ENCODE measurements at regions of chr15 and their contacts with region 1.

Region 1: GRCh38 chr15:29925227-29926082 is 103.2 kb upstream of the TJP1 start:
- DNase-seq: peak; percentile 70 to 90
- ATAC-seq: peak; percentile 85
- H3K4me3 ChIP-seq: no peak overlapping the region
- H3K27ac ChIP-seq: peak overlapping the region in 1 of 2 donors; percentile 47
- H3K4me1 ChIP-seq: peaks cover 2 to 5% of the 10 kb centered on the region in 2 donors
- H3K27me3 ChIP-seq: no peaks in the 10 kb centered on the region

Region 2: DNA sequence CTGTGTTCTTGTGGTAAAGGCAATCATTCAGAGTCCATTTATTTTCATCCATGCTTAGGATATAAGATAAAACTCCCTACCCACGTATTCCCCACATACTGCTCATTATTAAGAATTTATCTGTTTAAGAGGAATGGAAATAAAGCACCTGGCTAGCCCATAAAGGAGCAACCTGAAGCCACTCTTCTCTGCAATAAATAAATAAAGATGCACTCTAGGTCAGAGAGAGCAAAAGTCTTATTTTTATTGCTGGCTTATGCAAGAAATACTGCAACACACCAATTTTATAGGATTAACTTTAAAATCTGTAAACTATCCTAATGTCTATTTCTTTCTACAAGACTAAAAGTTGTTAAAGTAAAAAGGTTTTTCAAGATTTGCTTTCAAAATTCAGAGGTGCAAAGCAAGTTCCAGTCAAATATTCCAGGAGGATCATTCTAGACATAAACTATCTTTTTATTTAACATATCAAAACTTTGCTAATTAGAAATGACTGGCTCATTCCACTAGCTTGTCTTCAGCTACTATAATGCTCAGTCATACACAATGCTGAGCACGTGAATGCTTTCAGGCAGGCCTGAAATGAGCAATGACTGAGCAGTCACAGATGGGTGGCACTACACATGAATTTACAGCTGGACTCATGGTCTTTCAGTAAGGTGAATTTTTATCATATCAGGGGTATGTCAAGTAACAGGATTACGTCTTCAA is 110.3 kb before region 1 on chr15:
- intact Hi-C with region 1: loop called in 1 of 2 experiments (anchors 10 kb)
- DNase-seq: no peak
- ATAC-seq: no peak
- H3K4me3 ChIP-seq: no peak overlapping the region
- H3K27ac ChIP-seq: no peak overlapping the region
- H3K4me1 ChIP-seq: peaks cover 3 to 7% of the 10 kb centered on the region in 2 donors
- H3K27me3 ChIP-seq: no peaks in the 10 kb centered on the region

Region 3: DNA sequence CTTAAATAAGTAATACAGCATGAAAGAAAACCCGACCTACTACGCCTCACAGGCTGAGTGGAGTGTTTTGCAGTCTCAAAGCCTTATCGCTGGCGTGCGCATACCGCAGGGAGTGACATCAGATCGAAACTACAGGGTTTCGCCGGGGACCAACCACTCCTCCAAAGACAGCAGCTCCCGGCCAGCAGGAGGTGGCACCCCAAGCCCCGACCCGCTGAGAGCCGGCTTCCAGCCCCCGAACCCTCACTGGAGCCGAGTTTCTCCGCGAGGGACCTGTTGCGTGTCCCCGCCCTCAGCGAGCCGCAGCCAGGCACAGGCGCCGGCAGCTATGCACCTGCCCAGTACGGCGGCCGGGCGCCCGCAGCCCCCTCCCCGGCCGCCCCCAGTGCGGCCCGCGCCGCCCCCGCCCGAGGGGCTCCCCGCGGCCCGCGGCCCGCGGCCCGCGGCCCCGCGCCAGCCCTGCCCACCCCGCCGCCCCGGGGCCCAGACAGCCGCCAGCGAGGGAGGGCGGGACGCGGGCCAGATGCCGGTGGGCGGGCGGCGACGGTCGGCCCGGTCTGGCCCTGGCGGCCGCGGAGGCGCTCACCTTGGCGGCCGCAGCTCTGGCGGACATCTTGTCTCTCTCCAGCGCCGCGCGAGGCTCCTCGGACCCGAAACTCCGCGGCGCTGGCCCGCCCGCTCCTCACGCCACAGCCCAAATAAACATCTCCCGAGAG is 103.9 kb before region 1 on chr15:
- intact Hi-C with region 1: loop called (anchors 2 to 10 kb)
- DNase-seq: peak; percentile 77 to 90
- ATAC-seq: peak; percentile 65
- H3K4me3 ChIP-seq: peak overlapping the region; percentile 91 to 93
- H3K27ac ChIP-seq: peak overlapping the region; percentile 62 to 90
- H3K4me1 ChIP-seq: no peaks in the 10 kb centered on the region
- H3K27me3 ChIP-seq: no peaks in the 10 kb centered on the region

Region 4: GRCh38 chr15:29883126-29883525 is 42.3 kb before region 1 on chr15:
- intact Hi-C with region 1: loop called in 1 of 2 experiments (anchors 5 kb)
- DNase-seq: no peak
- ATAC-seq: no peak
- H3K4me3 ChIP-seq: no peak overlapping the region
- H3K27ac ChIP-seq: no peak overlapping the region
- H3K4me1 ChIP-seq: peaks cover 0 to 4% of the 10 kb centered on the region in 2 donors
- H3K27me3 ChIP-seq: no peaks in the 10 kb centered on the region